MCF 10A (cell line): ENCODE measurements at regions of chr21 and their contacts with region 1.

Region 1: GRCh38 chr21:41167348-41168342 is at the start of gene BACE2:
- DNase-seq: peak; percentile 81
- H3K4me3 Mint-ChIP-seq: peak within 1 kb of the TSS; percentile 83
- H3K27ac Mint-ChIP-seq: peak within 1 kb of the TSS; percentile 58
- H3K4me1 Mint-ChIP-seq: peaks cover 32% of the 10 kb centered on the region
- H3K27me3 Mint-ChIP-seq: no peaks in the 10 kb centered on the region
- CTCF ChIP-seq: peak; percentile 79
- total RNA-seq, gene BACE2: 21.3 and 22.0 TPM in 2 replicates

Region 2: GRCh38 chr21:41183575-41183974 is 15.9 kb after region 1 on chr21:
- CTCF ChIA-PET with region 1: interaction called, 17 read pairs
- POLR2A ChIA-PET with region 1: interaction called, 7 read pairs
- intact Hi-C with region 1: no loop called
- DNase-seq: no peak
- H3K4me3 Mint-ChIP-seq: no peak overlapping the region
- H3K27ac Mint-ChIP-seq: no peak overlapping the region
- H3K4me1 Mint-ChIP-seq: peaks cover 10% of the 10 kb centered on the region
- H3K27me3 Mint-ChIP-seq: no peaks in the 10 kb centered on the region
- CTCF ChIP-seq: no peak

Region 3: DNA sequence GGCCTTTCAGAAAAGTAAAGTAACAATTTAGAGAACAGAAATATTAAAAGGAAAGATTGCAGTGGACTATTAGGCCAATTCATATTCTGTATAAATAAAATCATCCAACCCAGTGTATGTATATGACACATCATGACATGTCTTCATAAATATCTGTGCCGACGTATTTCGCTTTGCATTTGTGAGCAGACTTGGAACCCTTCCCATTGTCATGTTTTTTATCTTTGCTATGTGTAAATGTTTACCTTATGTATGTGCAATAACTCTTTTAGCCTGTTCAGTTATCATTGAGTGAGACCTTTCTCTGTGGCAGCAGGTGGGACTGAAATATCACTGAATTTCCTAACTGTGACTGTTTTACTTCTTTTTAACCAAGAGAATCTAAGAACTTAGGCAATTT is 91.0 kb after region 1 on chr21:
- CTCF ChIA-PET with region 1: no interaction called
- POLR2A ChIA-PET with region 1: no interaction called
- intact Hi-C with region 1: loop called (anchors 5 kb)
- DNase-seq: peak; percentile 34
- H3K4me3 Mint-ChIP-seq: no peak overlapping the region
- H3K27ac Mint-ChIP-seq: no peak overlapping the region
- H3K4me1 Mint-ChIP-seq: no peaks in the 10 kb centered on the region
- H3K27me3 Mint-ChIP-seq: no peaks in the 10 kb centered on the region
- CTCF ChIP-seq: no peak

Region 4: GRCh38 chr21:41316200-41317062 is 148.8 kb after region 1 on chr21 and contains the start of gene FAM3B:
- CTCF ChIA-PET with region 1: no interaction called
- POLR2A ChIA-PET with region 1: no interaction called
- intact Hi-C with region 1: no loop called
- DNase-seq: no peak
- H3K4me3 Mint-ChIP-seq: no peak within 1 kb of the TSS
- H3K27ac Mint-ChIP-seq: no peak within 1 kb of the TSS
- H3K4me1 Mint-ChIP-seq: no peaks in the 10 kb centered on the region
- H3K27me3 Mint-ChIP-seq: peaks cover 21% of the 10 kb centered on the region
- CTCF ChIP-seq: no peak
- total RNA-seq, gene FAM3B: not detected in 2 replicates

Region 5: GRCh38 chr21:41419911-41420862 is 252.5 kb after region 1 on chr21:
- CTCF ChIA-PET with region 1: no interaction called
- POLR2A ChIA-PET with region 1: no interaction called
- intact Hi-C with region 1: no loop called
- DNase-seq: peak; percentile 86
- H3K4me3 Mint-ChIP-seq: peak overlapping the region; percentile 83
- H3K27ac Mint-ChIP-seq: peak overlapping the region; percentile 94
- H3K4me1 Mint-ChIP-seq: peaks cover 8% of the 10 kb centered on the region
- H3K27me3 Mint-ChIP-seq: peaks cover 11% of the 10 kb centered on the region
- CTCF ChIP-seq: no peak